ENCODE measurements at regions of chr2 and their contacts with region 1.

Region 1: DNA sequence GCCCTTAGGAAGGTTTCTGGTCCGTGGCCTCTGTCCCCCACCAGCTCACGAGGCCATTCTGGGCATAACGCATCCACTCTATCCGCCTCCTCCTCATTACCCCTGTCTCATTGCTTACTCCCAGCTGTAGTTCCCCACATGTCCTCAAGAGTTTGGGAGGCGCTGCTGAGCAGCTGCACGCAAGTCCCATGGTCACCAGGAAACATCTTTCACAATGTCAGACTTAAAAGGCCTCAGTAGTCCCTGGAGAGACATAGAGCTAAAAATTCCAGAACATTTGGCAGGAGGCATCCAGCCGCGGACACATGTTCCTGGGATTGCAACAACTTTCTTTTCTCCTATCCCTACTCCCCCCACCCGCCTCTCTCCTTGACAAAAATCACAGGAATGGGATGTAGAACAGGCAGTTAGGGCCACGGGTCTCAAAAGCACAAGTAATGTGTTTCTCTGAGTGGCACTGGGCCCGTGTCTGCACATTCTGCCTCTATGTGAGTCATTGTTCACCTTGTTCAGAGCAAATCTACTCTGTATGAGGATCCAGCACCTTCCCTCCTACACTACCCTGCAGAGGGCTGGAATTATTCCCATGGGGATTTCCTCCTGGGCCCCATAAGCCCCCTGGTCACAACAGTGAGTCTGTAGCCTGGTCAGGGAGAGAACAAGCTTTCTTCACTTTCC is 8.1 kb downstream of the LBH start:
- DNase-seq: peak; percentile 86
- H3K4me3 ChIP-seq: no peak overlapping the region; a peak in 2 of 4 replicates
- H3K27ac ChIP-seq: no peak overlapping the region
- H3K4me1 ChIP-seq: peaks cover 0 to 9% of the 10 kb centered on the region in 2 experiments; a peak in 2 of 4 replicates
- H3K27me3 ChIP-seq: no peaks in the 10 kb centered on the region
- CTCF ChIP-seq: peak; percentile 94
- EP300 ChIP-seq: no peak
- RAD21 ChIP-seq: peak; percentile 68

Region 2: DNA sequence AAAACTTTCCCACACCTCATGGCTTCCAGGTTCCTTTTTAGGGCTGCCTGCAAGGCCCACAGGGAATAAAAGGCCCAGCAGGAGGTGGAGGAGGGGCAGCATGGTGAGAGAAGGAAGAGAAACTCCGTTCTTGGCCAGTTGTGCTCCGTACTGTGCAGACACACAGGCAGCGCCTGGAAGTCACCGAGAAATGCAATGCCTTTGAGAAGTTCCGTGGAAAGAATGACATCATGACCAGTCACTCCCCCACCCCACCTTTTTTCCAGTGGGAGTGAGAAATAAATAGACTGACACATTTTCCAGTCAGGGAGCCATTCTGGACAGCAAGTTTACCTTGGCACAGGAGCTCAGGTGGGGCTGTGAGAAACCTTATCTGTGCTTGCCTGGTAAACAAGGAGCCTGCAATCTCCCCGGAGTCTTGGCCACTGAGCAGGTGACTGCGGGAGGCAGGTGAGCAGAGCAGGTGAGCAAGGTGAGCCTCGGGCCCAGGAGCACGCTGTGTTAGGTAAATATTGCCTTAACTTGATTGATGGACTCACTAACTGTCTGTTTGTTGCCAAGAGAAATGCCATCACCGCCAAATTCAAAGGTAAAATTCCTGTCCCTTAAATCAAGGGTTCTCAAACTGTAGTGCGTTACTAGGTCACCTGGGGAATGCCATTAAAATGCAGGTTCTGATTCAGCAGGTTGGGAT is 21.7 kb before region 1 on chr2:
- CTCF ChIA-PET with region 1: interaction called, 40 read pairs
- POLR2A ChIA-PET with region 1: no interaction called
- DNase-seq: no peak
- H3K4me3 ChIP-seq: no peak overlapping the region
- H3K27ac ChIP-seq: no peak overlapping the region
- H3K4me1 ChIP-seq: peaks cover 0 to 3% of the 10 kb centered on the region in 2 experiments; a peak in 2 of 4 replicates
- H3K27me3 ChIP-seq: no peaks in the 10 kb centered on the region
- CTCF ChIP-seq: no peak
- EP300 ChIP-seq: no peak
- RAD21 ChIP-seq: no peak

Region 3: DNA sequence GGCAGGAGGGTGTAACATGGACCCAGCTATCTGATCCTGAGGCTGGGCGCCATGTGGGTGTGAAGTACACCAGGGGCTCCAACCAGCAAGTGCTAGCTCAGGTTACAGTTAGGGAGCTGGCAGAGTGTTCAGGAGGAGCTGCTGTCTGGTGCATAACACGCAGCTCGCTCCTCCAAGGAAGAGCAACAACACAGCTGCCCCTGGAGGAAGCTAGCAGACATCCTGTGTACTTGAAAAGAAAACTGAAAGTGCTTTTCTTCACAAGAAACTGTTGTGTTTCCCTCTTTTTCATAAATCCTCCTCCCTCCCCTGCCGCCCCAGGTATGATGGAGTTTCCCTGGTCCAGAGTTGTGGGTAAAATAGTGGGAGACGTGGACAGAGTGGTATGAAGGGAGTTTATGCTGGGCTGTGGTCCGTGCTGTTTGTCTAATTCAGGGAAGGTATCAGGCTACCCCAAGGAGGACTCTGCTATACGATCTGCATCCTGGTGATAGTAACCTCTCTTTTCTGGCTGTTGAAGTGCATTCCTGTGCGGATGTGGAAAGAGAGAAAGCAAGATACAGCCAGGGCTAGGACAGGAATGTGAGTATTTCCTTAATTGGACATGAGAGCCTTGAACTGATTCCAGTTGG is 14.2 kb before region 1 on chr2:
- CTCF ChIA-PET with region 1: interaction called, 45 read pairs
- POLR2A ChIA-PET with region 1: no interaction called
- DNase-seq: no peak
- H3K4me3 ChIP-seq: peak overlapping the region; percentile 24 to 58; a peak in 3 of 4 replicates
- H3K27ac ChIP-seq: peak overlapping the region; percentile 17 to 20; a peak in 2 of 4 replicates
- H3K4me1 ChIP-seq: peaks cover 4 to 10% of the 10 kb centered on the region in 2 experiments; a peak in 3 of 4 replicates
- H3K27me3 ChIP-seq: no peaks in the 10 kb centered on the region
- CTCF ChIP-seq: no peak
- EP300 ChIP-seq: no peak
- RAD21 ChIP-seq: no peak

Region 4: GRCh38 chr2:30252723-30253701 is 13.6 kb after region 1 on chr2:
- CTCF ChIA-PET with region 1: interaction called, 97 read pairs
- POLR2A ChIA-PET with region 1: no interaction called
- DNase-seq: no peak
- H3K4me3 ChIP-seq: no peak overlapping the region
- H3K27ac ChIP-seq: peak overlapping the region in 1 of 2 experiments; percentile 42; a peak in 1 of 4 replicates
- H3K4me1 ChIP-seq: peaks cover 8 to 18% of the 10 kb centered on the region in 2 experiments; a peak in 3 of 4 replicates
- H3K27me3 ChIP-seq: no peaks in the 10 kb centered on the region
- CTCF ChIP-seq: no peak
- EP300 ChIP-seq: peak in 1 of 2 experiments; percentile 67; a peak in 1 of 4 replicates
- RAD21 ChIP-seq: no peak

Region 5: GRCh38 chr2:30266051-30266621 is 26.7 kb after region 1 on chr2:
- CTCF ChIA-PET with region 1: interaction called, 15 read pairs
- POLR2A ChIA-PET with region 1: no interaction called
- DNase-seq: no peak
- H3K4me3 ChIP-seq: no peak overlapping the region
- H3K27ac ChIP-seq: peak overlapping the region in 1 of 2 experiments; percentile 45; a peak in 2 of 4 replicates
- H3K4me1 ChIP-seq: peaks cover 0 to 2% of the 10 kb centered on the region in 2 experiments; a peak in 1 of 4 replicates
- H3K27me3 ChIP-seq: no peaks in the 10 kb centered on the region
- CTCF ChIP-seq: no peak
- EP300 ChIP-seq: no peak
- RAD21 ChIP-seq: no peak

Region 6: DNA sequence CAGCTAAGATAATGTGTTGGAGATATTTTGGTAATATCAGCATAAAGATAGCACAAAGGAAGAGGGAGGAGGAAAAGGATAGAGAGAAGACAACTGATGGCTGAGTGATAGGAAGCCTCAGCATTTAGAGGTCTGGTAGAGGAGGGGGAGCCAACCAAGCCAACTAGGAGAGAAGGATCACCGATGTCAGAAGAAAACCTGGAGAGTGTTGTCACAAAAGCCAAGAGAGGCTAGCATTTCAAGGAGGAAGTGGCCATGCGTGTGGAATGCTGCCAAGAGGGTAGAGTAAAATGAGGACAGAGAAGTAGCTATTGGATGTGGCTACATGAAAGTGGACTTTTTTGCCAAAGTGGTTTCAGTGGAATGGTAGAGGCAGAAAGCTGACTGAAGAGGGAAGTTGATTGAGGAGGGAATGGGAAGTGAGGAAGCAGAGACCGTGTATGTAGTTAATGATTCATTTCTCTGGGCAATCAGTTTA is 241.9 kb after region 1 on chr2:
- CTCF ChIA-PET with region 1: no interaction called
- POLR2A ChIA-PET with region 1: no interaction called
- DNase-seq: no peak
- H3K4me3 ChIP-seq: no peak overlapping the region
- H3K27ac ChIP-seq: no peak overlapping the region
- H3K4me1 ChIP-seq: peaks cover 0 to 17% of the 10 kb centered on the region in 2 experiments; a peak in 2 of 4 replicates
- H3K27me3 ChIP-seq: no peaks in the 10 kb centered on the region
- CTCF ChIP-seq: no peak
- EP300 ChIP-seq: no peak
- RAD21 ChIP-seq: no peak

Region 7: DNA sequence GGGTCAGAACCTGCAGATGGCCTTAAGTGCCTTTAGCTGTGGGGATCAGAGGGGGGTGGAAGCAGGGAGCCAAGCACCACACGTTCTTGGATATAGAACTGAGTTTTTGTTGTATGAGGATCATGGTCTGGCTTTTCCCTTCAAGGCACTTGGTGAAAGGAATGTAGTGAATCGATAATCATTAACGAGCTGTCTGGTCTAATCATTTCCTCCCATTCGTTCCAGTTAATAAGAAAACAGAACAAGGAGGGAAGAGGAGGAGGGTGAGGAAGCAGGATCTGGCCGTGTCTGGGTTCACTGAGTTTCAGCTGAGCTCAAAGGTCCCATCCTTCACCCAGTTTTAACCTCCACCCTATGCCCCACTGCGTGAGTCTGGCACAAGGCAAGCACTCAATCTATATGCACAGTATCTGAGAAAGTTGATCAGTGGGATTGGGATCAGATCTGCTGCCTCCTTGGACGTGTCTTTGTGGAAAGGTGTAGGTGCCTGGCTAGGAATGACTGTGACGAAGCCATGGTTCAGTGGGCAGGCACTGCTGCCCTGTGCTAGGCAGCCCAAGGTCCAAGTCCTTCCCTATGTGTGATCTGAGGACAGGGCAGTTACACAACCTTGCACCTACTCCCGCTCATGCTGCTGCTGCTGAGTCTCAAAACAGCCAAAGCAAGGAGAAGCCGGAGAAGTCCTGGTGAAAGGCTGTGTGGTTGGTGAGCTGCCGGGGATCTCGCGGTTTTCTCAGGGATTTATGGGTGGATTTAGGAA is 844.0 kb after region 1 on chr2:
- CTCF ChIA-PET with region 1: no interaction called
- POLR2A ChIA-PET with region 1: no interaction called
- DNase-seq: no peak
- H3K4me3 ChIP-seq: no peak overlapping the region
- H3K27ac ChIP-seq: no peak overlapping the region
- H3K4me1 ChIP-seq: peaks cover 0 to 4% of the 10 kb centered on the region in 2 experiments; a peak in 1 of 4 replicates
- H3K27me3 ChIP-seq: no peaks in the 10 kb centered on the region
- CTCF ChIP-seq: no peak
- EP300 ChIP-seq: no peak
- RAD21 ChIP-seq: no peak

Measured in SK-N-SH (cell line).